ENCODE measurements at regions of chr5 and their contacts with region 1.

Region 1: GRCh38 chr5:131224387-131225201 is 39.3 kb upstream of the CDC42SE2 start:
- DNase-seq: no peak
- H3K4me3 Mint-ChIP-seq: no peak overlapping the region
- H3K27ac Mint-ChIP-seq: no peak overlapping the region
- H3K4me1 Mint-ChIP-seq: peaks cover 7% of the 10 kb centered on the region
- H3K27me3 Mint-ChIP-seq: no peaks in the 10 kb centered on the region
- CTCF ChIP-seq: no peak

Region 2: GRCh38 chr5:131170540-131171275 is 53.9 kb before region 1 on chr5 and contains the start of gene LYRM7:
- CTCF ChIA-PET with region 1: no interaction called
- POLR2A ChIA-PET with region 1: interaction called, 4 read pairs
- intact Hi-C with region 1: loop called (anchors 1 kb)
- DNase-seq: peak; percentile 100
- H3K4me3 Mint-ChIP-seq: peak within 1 kb of the TSS; percentile 90
- H3K27ac Mint-ChIP-seq: peak within 1 kb of the TSS; percentile 90
- H3K4me1 Mint-ChIP-seq: peaks cover 4% of the 10 kb centered on the region
- H3K27me3 Mint-ChIP-seq: no peaks in the 10 kb centered on the region
- CTCF ChIP-seq: no peak
- total RNA-seq, gene LYRM7: 18.2 and 21.6 TPM in 2 replicates

Region 3: DNA sequence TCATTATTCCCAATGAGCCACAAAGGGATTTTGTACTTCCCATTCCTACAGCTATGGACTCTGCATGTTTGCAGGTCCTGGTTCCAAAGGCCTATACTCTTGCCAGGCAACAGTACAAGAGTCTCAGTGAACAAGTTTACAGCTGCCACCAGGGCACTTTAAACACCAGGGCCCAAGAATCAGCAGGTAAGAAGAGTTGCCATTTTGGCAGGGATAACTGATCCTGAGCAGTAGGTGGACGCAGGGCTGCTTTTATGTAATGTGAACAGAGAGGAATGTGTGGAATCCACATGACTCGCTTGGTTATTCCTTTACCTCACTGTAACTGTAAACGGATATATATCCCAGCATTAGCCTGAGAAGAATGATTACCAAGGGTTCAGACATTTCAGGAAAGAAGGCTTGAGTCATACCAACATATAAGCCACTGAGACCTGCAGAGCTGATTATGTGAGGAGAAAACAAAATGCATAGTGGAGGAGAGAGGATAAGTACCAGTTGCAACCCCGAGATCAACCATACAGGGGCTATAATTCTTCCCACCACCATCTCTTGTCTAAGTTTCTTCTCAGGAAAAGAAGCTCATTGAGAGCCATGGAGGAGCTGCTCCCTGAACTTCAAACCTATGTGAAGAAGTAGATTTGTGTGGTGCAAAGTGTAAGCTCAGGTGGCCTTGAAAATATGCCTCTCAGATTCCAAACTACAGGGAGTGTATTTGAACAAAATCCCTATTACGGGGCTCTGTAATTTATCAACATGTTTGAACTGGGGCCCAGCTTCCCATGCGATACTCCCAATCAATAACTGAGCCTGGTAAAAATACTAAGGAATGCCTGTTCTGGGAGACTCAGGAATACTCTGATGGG is 385.8 kb after region 1 on chr5:
- CTCF ChIA-PET with region 1: no interaction called
- POLR2A ChIA-PET with region 1: no interaction called
- intact Hi-C with region 1: no loop called
- DNase-seq: peak; percentile 42
- H3K4me3 Mint-ChIP-seq: no peak overlapping the region
- H3K27ac Mint-ChIP-seq: no peak overlapping the region
- H3K4me1 Mint-ChIP-seq: peaks cover 29% of the 10 kb centered on the region
- H3K27me3 Mint-ChIP-seq: no peaks in the 10 kb centered on the region
- CTCF ChIP-seq: no peak